ENCODE measurements at regions of chr7 and their contacts with region 1.

Region 1: DNA sequence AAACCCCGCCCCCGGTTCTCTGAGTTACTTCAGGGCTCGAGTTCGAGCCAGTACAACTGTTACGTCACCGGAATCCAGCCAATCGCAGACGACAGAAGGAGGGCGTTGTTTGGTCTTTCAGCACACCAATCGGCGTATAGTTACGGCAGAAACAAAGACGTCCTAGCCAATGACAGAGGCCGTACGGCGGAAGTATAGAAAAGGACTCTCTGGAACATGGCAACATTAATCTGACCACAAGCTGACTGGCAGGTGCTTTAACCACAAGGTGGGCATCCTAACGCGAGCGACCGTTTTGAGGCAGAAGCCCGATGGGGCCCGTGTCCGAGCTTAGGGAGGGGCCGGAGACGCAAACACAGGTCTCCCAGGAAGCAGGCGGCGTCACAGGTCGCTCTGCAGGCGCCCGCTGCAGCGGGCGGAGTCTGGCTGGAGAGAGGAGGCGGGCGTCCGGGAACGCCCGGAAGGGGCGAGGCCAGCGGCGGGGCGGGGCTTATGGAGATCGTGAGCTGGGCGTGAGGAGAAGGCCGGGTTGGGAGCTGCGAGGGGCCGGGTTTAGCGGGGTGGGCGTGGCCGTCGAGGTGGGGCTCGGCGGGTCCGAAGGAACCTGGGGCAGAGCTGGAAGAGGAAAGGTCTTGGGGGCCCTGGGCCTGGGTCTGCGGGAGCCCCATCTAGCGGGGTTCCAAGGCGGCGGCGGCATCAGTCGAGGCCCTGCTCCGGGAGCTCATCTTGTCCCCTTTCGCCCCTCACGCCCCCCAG is at the start of gene MOSPD3:
- DNase-seq: peak; percentile 99
- ATAC-seq: peak; percentile 93
- H3K4me3 Mint-ChIP-seq: peak within 1 kb of the TSS; percentile 94
- H3K27ac Mint-ChIP-seq: peak within 1 kb of the TSS; percentile 100
- H3K4me1 Mint-ChIP-seq: peaks cover 6% of the 10 kb centered on the region; the same call in 1 of the 2 replicates
- H3K27me3 Mint-ChIP-seq: no peaks in the 10 kb centered on the region; the same call in 1 of the 2 replicates
- CTCF ChIP-seq: no peak
- total RNA-seq, gene MOSPD3: 21.9 to 22.4 TPM (median 22.0 TPM) in 3 replicates

Region 2: GRCh38 chr7:100626530-100627237 is 14.5 kb after region 1 on chr7:
- CTCF ChIA-PET with region 1: interaction called, 37 read pairs
- POLR2A ChIA-PET with region 1: interaction called, 8 read pairs
- DNase-seq: peak; percentile 87
- ATAC-seq: peak; percentile 89
- H3K4me3 Mint-ChIP-seq: peak overlapping the region; percentile 65
- H3K27ac Mint-ChIP-seq: no peak overlapping the region
- H3K4me1 Mint-ChIP-seq: peaks cover 7% of the 10 kb centered on the region
- H3K27me3 Mint-ChIP-seq: peaks cover 22% of the 10 kb centered on the region
- CTCF ChIP-seq: no peak

Region 3: DNA sequence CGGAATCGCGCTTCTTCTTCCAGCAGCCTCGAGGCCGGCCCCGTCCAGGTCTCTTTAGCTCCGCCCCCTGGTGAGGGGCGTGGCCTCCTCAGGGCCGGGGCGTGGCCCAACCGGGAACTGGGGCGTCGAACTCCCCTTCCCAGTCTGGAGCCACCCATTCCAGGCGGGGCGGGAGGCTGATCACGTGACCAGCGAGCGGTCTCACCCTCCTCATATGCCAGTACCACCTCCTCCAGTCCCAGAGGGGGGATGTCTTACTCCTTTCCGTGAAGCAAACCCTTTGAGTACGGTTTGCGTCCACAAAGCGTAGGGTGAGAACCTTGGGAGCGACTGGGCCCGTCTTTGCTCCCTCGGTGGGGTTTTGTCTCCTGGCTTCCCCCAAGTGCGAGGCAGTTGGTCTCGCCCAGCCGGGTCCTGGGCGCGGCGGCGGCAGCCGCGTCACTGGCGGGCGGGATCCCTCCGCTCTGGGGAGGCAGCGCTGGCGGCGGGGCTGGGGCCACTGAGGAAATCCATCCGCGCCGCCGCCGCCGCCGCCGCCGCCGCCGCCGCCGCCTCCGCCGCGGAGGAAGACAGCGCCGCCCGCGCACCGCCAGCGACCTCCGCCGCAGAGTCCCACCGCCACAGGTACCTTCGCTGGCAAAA is 61.3 kb after region 1 on chr7 and contains the start of gene GNB2:
- CTCF ChIA-PET with region 1: interaction called, 12 read pairs
- POLR2A ChIA-PET with region 1: interaction called, 5 read pairs
- DNase-seq: peak; percentile 100
- ATAC-seq: peak; percentile 77
- H3K4me3 Mint-ChIP-seq: peak within 1 kb of the TSS; percentile 88
- H3K27ac Mint-ChIP-seq: peak within 1 kb of the TSS; percentile 92
- H3K4me1 Mint-ChIP-seq: peaks cover 4% of the 10 kb centered on the region
- H3K27me3 Mint-ChIP-seq: peaks cover 39% of the 10 kb centered on the region
- CTCF ChIP-seq: no peak
- total RNA-seq, gene GNB2: 182 to 194 TPM (median 184 TPM) in 3 replicates

Measured in WTC11 (cell line).